IMR-90 (cell line): ENCODE measurements at regions of chr10 and their contacts with region 1.

Region 1: GRCh38 chr10:102713814-102714620 is at the start of gene ARL3:
- DNase-seq: peak; percentile 98
- ATAC-seq: peak; percentile 89
- H3K4me3 ChIP-seq: peak within 1 kb of the TSS; percentile 81
- H3K27ac ChIP-seq: peak within 1 kb of the TSS; percentile 86
- H3K4me1 ChIP-seq: peaks cover 9% of the 10 kb centered on the region
- H3K27me3 ChIP-seq: no peaks in the 10 kb centered on the region
- CTCF ChIP-seq: peak; percentile 41; the same call in 1 of the 2 replicates
- POLR2A ChIP-seq: peak; percentile 43; the same call in 1 of the 2 replicates
- RAD21 ChIP-seq: 0 out of 2 replicates have a peak, but pooled peaks have one; percentile 34
- total RNA-seq, gene ARL3: 5.0 and 11.7 TPM in 2 replicates

Region 2: GRCh38 chr10:101566333-101567164 is 1147.5 kb before region 1 on chr10:
- CTCF ChIA-PET with region 1: no interaction called
- POLR2A ChIA-PET with region 1: no interaction called
- dilution Hi-C with region 1: no loop called
- in situ Hi-C with region 1: no loop called
- intact Hi-C with region 1: no loop called
- DNase-seq: peak; percentile 20
- ATAC-seq: peak; percentile 13
- H3K4me3 ChIP-seq: no peak overlapping the region
- H3K27ac ChIP-seq: no peak overlapping the region
- H3K4me1 ChIP-seq: peaks cover 6% of the 10 kb centered on the region
- H3K27me3 ChIP-seq: peaks cover 46% of the 10 kb centered on the region
- CTCF ChIP-seq: 0 out of 2 replicates have a peak, but pooled peaks have one; percentile 2
- POLR2A ChIP-seq: no peak
- RAD21 ChIP-seq: no peak

Region 3: DNA sequence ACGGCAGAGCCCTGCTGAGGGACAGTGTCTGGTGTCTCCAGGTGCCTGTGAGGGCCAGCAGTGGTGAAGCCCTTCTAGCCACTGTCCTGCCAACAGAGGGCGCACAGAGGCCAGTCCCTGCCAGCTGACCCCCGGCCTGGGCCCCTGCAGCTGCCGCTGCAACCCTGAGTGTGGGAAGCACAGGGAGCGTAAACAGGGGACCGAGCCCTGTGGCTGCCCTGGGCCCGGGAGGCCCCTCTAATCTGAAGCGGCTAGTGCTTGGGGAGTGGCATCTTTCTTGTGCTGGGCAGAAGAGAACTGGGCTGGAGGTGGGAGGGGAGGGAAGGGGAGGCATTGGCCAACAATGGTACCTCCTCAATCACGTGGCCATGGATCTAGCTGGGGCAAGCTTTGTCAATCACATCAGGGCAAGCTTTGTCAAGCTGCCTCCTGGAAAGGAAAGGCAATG is 35.2 kb before region 1 on chr10:
- CTCF ChIA-PET with region 1: interaction called, 13 read pairs
- POLR2A ChIA-PET with region 1: no interaction called
- dilution Hi-C with region 1: no loop called
- in situ Hi-C with region 1: no loop called
- intact Hi-C with region 1: loop called (anchors 2 kb)
- DNase-seq: peak; percentile 52
- ATAC-seq: peak; percentile 40
- H3K4me3 ChIP-seq: no peak overlapping the region
- H3K27ac ChIP-seq: peak overlapping the region; percentile 15
- H3K4me1 ChIP-seq: peaks cover 44% of the 10 kb centered on the region
- H3K27me3 ChIP-seq: no peaks in the 10 kb centered on the region
- CTCF ChIP-seq: peak; percentile 76
- POLR2A ChIP-seq: no peak
- RAD21 ChIP-seq: peak; percentile 70